OCI-LY7 (cell line): ENCODE measurements at regions of chr14 and their contacts with region 1.

Region 1: GRCh38 chr14:91510174-91511042 is at the start of gene PPP4R3A:
- DNase-seq: peak; percentile 96
- H3K4me3 ChIP-seq: peak within 1 kb of the TSS; percentile 85
- H3K27ac ChIP-seq: peak within 1 kb of the TSS; percentile 87
- H3K4me1 ChIP-seq: peaks cover 30% of the 10 kb centered on the region
- CTCF ChIP-seq: no peak
- total RNA-seq, gene PPP4R3A: 80.7 and 84.7 TPM in 2 replicates

Region 2: DNA sequence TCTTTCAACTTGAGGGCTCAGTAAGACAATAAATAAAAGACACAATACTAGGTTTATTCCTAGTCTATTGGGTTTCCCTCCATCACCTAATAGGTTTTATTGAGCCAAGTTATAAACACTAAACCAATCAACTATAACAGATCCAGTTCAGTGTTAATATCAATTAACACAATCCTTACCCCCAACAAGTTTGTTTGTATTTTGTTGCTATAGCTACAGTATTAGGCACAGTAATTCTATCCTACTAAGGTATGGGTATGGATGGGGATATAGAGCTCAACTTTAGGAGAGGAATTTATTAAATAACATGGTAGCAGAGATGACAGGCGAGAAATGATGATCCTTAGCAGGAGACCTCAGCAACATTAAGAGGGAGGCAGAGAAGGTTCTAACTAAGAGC is 13.6 kb before region 1 on chr14:
- CTCF ChIA-PET with region 1: no interaction called
- POLR2A ChIA-PET with region 1: interaction called, 17 read pairs
- intact Hi-C with region 1: loop called (anchors 1 kb)
- DNase-seq: no peak
- H3K4me3 ChIP-seq: peak overlapping the region; percentile 62
- H3K27ac ChIP-seq: peak overlapping the region; percentile 91
- H3K4me1 ChIP-seq: peaks cover 91% of the 10 kb centered on the region
- CTCF ChIP-seq: no peak